Activated CD8-positive, alpha-beta T cell treated with anti-CD3 and anti-CD28 coated beads for 36 hours (primary cell): ENCODE measurements at regions of chr5 and their contacts with region 1.

Region 1: GRCh38 chr5:55711968-55712859 is at the start of gene SLC38A9:
- DNase-seq: peak; percentile 97
- ATAC-seq: peak; percentile 100
- H3K4me3 Mint-ChIP-seq: peak within 1 kb of the TSS; percentile 98
- H3K27ac Mint-ChIP-seq: peak within 1 kb of the TSS; percentile 90
- H3K4me1 Mint-ChIP-seq: peaks cover 15% of the 10 kb centered on the region
- H3K27me3 Mint-ChIP-seq: no peaks in the 10 kb centered on the region
- CTCF ChIP-seq: no peak
- total RNA-seq, gene SLC38A9: 11.4 to 12.0 TPM

Region 2: DNA sequence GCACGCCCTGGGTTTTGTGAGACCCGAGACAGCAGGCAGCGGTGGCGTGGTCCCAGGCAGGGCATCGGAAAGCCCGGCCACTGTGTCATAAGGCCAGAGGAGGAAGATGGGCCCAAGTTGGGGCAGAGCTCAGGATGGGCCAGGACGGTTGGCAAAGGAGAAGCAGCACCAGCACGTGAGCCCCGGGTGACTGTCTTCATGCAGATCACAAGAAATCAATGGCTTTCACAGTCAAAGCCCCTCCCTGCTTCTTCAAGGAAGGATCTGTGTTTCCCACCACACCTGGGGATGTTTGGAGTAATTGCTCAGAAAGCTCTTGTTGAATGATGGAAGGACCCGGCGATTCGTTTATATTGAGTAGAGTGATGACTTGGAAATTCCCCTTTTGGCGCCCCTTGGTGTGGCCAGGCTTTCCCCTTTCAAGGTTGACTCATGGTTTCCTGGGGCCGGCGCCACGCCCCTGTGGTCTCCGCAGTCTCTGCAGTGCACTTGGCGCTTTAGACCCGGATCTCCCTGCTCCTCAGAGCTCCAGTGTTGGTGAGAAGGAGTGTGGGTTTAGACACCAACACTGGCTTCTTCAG is 191.0 kb after region 1 on chr5:
- CTCF ChIA-PET with region 1: no interaction called
- POLR2A ChIA-PET with region 1: no interaction called
- intact Hi-C with region 1: loop called (anchors 10 kb)
- DNase-seq: peak; percentile 93
- ATAC-seq: peak; percentile 94
- H3K4me3 Mint-ChIP-seq: peak overlapping the region; percentile 15
- H3K27ac Mint-ChIP-seq: peak overlapping the region; percentile 61
- H3K4me1 Mint-ChIP-seq: peaks cover 27% of the 10 kb centered on the region
- H3K27me3 Mint-ChIP-seq: peaks cover 12% of the 10 kb centered on the region
- CTCF ChIP-seq: no peak

Region 3: DNA sequence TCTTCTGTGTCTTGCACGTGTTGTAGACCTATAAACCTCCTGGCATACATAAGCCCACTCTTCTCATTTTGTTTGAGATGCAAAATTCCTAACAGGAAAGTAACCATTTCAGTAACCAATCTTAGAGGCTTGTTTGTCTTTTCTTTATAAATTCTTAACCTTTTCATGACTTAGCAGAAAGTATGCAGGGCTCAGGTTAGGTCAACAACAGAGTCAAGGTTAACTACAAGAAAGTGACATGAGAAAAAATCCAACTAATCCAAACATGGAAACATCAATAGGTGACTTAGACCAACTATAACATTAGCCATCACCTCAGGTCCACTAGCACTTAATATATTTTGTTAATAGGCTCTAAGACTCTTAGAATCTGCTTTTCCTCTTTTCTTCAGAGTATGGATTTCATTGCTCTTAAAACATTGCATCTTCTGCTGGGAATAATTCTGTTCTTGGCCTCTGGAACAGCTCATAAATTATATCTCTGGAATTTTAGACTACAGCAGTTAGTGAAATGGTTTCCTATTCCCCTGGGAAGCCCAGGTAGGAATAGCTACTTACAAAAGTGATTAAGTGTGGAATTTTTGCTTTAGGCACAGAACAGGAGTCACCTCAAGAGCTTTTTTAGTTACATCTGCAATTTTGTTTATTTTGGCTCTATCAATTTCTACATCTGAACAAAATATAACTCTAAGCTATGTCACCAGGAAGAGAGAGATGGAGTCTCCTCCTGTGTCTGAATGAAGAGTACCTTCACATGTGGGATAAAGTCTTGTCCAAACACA is 676.2 kb after region 1 on chr5:
- CTCF ChIA-PET with region 1: no interaction called
- POLR2A ChIA-PET with region 1: no interaction called
- intact Hi-C with region 1: no loop called
- DNase-seq: no peak
- ATAC-seq: no peak
- H3K4me3 Mint-ChIP-seq: no peak overlapping the region
- H3K27ac Mint-ChIP-seq: no peak overlapping the region
- H3K4me1 Mint-ChIP-seq: no peaks in the 10 kb centered on the region
- H3K27me3 Mint-ChIP-seq: no peaks in the 10 kb centered on the region
- CTCF ChIP-seq: no peak